ENCODE measurements at regions of chr2 and their contacts with region 1.

Region 1: DNA sequence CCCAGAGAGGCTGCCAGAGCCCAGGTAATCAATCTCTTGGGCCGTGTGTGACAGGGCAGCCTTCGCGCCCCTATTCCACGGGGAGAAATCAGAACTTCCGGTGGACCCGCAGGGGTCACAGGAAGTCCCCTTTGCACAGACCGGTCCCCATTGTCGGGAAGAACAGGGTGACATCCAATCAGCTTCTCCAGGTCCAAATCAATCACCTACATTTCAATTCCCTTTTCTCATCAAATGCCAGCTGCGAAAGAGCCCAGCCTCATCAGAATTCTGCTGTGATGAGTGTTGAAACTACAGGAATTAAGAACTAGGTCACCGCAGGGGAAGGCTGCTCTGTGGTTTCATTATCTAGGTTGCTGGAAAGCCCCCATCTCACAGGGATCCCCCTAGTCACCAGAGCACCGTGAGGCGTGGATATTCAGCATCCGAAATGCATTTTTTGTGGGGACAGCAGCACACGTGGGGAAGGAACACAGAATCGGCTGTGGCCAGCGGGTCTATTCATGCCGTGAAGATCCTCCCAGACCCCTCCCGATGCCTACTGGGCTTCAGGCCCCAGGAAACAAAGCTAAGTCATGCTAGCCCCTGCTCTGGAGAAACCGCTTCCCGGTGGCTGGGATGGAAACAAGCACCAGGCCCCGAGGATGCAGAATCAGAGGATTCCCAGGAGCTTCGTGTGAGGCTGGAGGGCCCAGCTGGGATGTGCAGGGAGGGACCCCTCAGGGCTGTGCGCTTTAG is 193.7 kb upstream of the ID2 start:
- DNase-seq: peak; percentile 71 to 93
- ATAC-seq: peak; percentile 81 to 91 (median 91)
- H3K4me3 ChIP-seq: peak overlapping the region; percentile 30
- H3K4me3 Mint-ChIP-seq: peak overlapping the region; percentile 98
- H3K27ac ChIP-seq: peak overlapping the region; percentile 95
- H3K27ac Mint-ChIP-seq: peak overlapping the region; percentile 97 to 100
- H3K4me1 ChIP-seq: peaks cover 59% of the 10 kb centered on the region
- H3K4me1 Mint-ChIP-seq: peaks cover 68 to 69% of the 10 kb centered on the region in 2 donors
- H3K27me3 ChIP-seq: no peaks in the 10 kb centered on the region
- H3K27me3 Mint-ChIP-seq: no peaks in the 10 kb centered on the region
- CTCF ChIP-seq: no peak

Region 2: GRCh38 chr2:8472545-8473323 is 15.4 kb before region 1 on chr2:
- intact Hi-C with region 1: loop called (anchors 2 kb)
- DNase-seq: peak in 1 of 2 donors; percentile 50
- ATAC-seq: peak; percentile 34 to 69 (median 55)
- H3K4me3 ChIP-seq: no peak overlapping the region
- H3K4me3 Mint-ChIP-seq: peak overlapping the region; percentile 86
- H3K27ac ChIP-seq: peak overlapping the region; percentile 77
- H3K27ac Mint-ChIP-seq: peak overlapping the region; percentile 86 to 100
- H3K4me1 ChIP-seq: peaks cover 86% of the 10 kb centered on the region
- H3K4me1 Mint-ChIP-seq: peaks cover 87 to 91% of the 10 kb centered on the region in 2 donors
- H3K27me3 ChIP-seq: no peaks in the 10 kb centered on the region
- H3K27me3 Mint-ChIP-seq: no peaks in the 10 kb centered on the region
- CTCF ChIP-seq: no peak

Region 3: GRCh38 chr2:8477552-8478470 is 10.4 kb before region 1 on chr2:
- intact Hi-C with region 1: loop called (anchors 1 kb)
- DNase-seq: peak; percentile 44 to 68
- ATAC-seq: peak; percentile 46 to 69 (median 66)
- H3K4me3 ChIP-seq: peak overlapping the region; percentile 17
- H3K4me3 Mint-ChIP-seq: peak overlapping the region; percentile 86
- H3K27ac ChIP-seq: peak overlapping the region; percentile 93
- H3K27ac Mint-ChIP-seq: peak overlapping the region; percentile 86 to 100
- H3K4me1 ChIP-seq: peaks cover 94% of the 10 kb centered on the region
- H3K4me1 Mint-ChIP-seq: peaks cover 97 to 100% of the 10 kb centered on the region in 2 donors
- H3K27me3 ChIP-seq: no peaks in the 10 kb centered on the region
- H3K27me3 Mint-ChIP-seq: no peaks in the 10 kb centered on the region
- CTCF ChIP-seq: no peak

Region 4: DNA sequence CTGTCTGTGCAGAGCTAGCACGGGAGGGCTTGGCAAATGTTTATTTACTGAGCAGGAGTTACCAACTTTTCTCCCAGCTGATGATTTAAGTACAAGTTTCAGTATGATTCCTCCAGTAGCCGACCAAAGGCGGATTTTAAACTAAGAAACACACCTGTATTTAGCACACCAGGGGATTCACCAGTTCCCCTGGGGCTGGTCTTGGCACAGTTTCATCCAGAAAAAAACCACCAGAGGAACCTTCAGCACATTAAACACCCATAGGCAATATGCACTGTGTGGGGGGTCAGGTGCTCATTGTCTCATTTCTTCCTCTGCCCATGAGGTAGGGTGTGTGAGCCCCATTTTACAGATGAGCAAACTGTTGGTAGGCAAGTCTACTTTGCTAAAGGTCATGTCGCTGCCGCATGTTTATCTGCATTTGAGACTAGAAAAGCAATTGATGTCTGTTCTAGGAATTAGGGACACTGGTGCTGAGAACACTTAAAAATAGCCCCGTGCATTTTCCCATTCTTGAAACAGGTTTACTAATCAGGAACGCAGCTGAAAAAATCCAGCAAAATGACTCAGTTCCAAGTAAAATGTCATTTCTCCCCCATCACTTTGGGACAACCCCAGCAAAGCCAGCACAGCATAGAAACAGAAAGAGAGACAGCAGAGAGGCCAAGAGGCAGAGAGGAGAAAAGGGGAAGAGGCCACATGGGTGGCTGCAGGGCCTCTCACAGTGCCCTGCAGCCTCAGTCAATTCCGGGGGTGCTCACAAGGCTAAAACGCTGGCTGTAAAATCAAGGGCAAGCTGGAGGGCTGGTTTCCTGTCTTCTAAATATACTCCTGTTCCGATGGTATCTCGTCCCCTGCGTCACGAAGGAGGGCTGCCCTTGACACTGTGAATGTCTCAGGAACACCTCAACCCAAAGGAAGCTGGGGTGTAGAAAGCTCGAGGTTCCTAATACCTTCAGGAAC is 26.9 kb after region 1 on chr2:
- intact Hi-C with region 1: loop called (anchors 1 kb)
- DNase-seq: peak; percentile 46 to 85
- ATAC-seq: peak; percentile 43 to 76 (median 63)
- H3K4me3 ChIP-seq: no peak overlapping the region
- H3K4me3 Mint-ChIP-seq: peak overlapping the region; percentile 68
- H3K27ac ChIP-seq: peak overlapping the region; percentile 92
- H3K27ac Mint-ChIP-seq: peak overlapping the region; percentile 88 to 94
- H3K4me1 ChIP-seq: peaks cover 99% of the 10 kb centered on the region
- H3K4me1 Mint-ChIP-seq: peaks cover 71 to 84% of the 10 kb centered on the region in 2 donors
- H3K27me3 ChIP-seq: no peaks in the 10 kb centered on the region
- H3K27me3 Mint-ChIP-seq: no peaks in the 10 kb centered on the region
- CTCF ChIP-seq: no peak

Region 5: GRCh38 chr2:8544786-8545694 is 56.9 kb after region 1 on chr2:
- intact Hi-C with region 1: loop called (anchors 1 kb)
- DNase-seq: peak; percentile 71 to 88
- ATAC-seq: peak; percentile 67 to 78 (median 69)
- H3K4me3 ChIP-seq: no peak overlapping the region
- H3K4me3 Mint-ChIP-seq: peak overlapping the region; percentile 50
- H3K27ac ChIP-seq: peak overlapping the region; percentile 87
- H3K27ac Mint-ChIP-seq: peak overlapping the region; percentile 99
- H3K4me1 ChIP-seq: peaks cover 74% of the 10 kb centered on the region
- H3K4me1 Mint-ChIP-seq: peaks cover 73 to 82% of the 10 kb centered on the region in 2 donors
- H3K27me3 ChIP-seq: no peaks in the 10 kb centered on the region
- H3K27me3 Mint-ChIP-seq: no peaks in the 10 kb centered on the region
- CTCF ChIP-seq: peak; percentile 45

Measured in natural killer cell (primary cell).